MCF 10A (cell line): ENCODE measurements at regions of chr1 and their contacts with region 1.

Region 1: GRCh38 chr1:214123061-214123784 is 135.4 kb downstream of the PROX1 start:
- DNase-seq: peak; percentile 78
- H3K4me3 Mint-ChIP-seq: no peak overlapping the region
- H3K27ac Mint-ChIP-seq: no peak overlapping the region
- H3K4me1 Mint-ChIP-seq: peaks cover 6% of the 10 kb centered on the region
- H3K27me3 Mint-ChIP-seq: no peaks in the 10 kb centered on the region
- CTCF ChIP-seq: peak; percentile 95

Region 2: DNA sequence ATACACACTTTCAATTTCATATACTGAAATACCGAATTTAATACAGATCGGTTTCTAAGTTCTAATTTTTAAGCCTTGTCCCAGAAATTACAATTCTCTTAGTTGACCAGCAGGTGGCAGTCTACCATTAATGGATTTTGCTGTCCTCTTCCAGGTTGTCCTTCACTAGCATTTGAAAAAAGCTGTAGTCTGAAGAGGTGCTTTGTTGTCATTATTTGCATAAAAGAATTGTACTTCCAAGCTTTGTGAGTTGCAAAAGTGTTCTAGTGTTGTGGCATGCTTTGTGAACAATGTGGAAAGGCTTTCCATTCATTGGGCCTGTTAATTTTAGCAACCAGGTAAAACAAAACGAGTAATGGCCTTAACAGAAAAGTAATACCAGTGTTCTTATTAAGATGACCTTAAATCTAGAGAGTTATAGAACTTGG is 878.5 kb before region 1 on chr1:
- CTCF ChIA-PET with region 1: interaction called, 34 read pairs
- POLR2A ChIA-PET with region 1: interaction called, 3 read pairs
- intact Hi-C with region 1: loop called (anchors 1 kb)
- DNase-seq: peak; percentile 88
- H3K4me3 Mint-ChIP-seq: no peak overlapping the region
- H3K27ac Mint-ChIP-seq: peak overlapping the region; percentile 17
- H3K4me1 Mint-ChIP-seq: no peaks in the 10 kb centered on the region
- H3K27me3 Mint-ChIP-seq: no peaks in the 10 kb centered on the region
- CTCF ChIP-seq: peak; percentile 97

Region 3: GRCh38 chr1:213374369-213374768 is 748.9 kb before region 1 on chr1:
- CTCF ChIA-PET with region 1: interaction called, 138 read pairs
- POLR2A ChIA-PET with region 1: interaction called, 6 read pairs
- intact Hi-C with region 1: loop called (anchors 1 kb)
- DNase-seq: peak; percentile 90
- H3K4me3 Mint-ChIP-seq: no peak overlapping the region
- H3K27ac Mint-ChIP-seq: no peak overlapping the region
- H3K4me1 Mint-ChIP-seq: peaks cover 4% of the 10 kb centered on the region
- H3K27me3 Mint-ChIP-seq: no peaks in the 10 kb centered on the region
- CTCF ChIP-seq: peak; percentile 99

Region 4: GRCh38 chr1:213786683-213787082 is 336.5 kb before region 1 on chr1:
- CTCF ChIA-PET with region 1: interaction called, 13 read pairs
- POLR2A ChIA-PET with region 1: no interaction called
- intact Hi-C with region 1: no loop called
- DNase-seq: no peak
- H3K4me3 Mint-ChIP-seq: no peak overlapping the region
- H3K27ac Mint-ChIP-seq: no peak overlapping the region
- H3K4me1 Mint-ChIP-seq: no peaks in the 10 kb centered on the region
- H3K27me3 Mint-ChIP-seq: peaks cover 51% of the 10 kb centered on the region
- CTCF ChIP-seq: no peak

Region 5: GRCh38 chr1:214102907-214103306 is 20.3 kb before region 1 on chr1:
- CTCF ChIA-PET with region 1: interaction called, 13 read pairs
- POLR2A ChIA-PET with region 1: interaction called, 3 read pairs
- intact Hi-C with region 1: no loop called
- DNase-seq: peak; percentile 86
- H3K4me3 Mint-ChIP-seq: no peak overlapping the region
- H3K27ac Mint-ChIP-seq: no peak overlapping the region
- H3K4me1 Mint-ChIP-seq: peaks cover 5% of the 10 kb centered on the region
- H3K27me3 Mint-ChIP-seq: no peaks in the 10 kb centered on the region
- CTCF ChIP-seq: no peak

Region 6: DNA sequence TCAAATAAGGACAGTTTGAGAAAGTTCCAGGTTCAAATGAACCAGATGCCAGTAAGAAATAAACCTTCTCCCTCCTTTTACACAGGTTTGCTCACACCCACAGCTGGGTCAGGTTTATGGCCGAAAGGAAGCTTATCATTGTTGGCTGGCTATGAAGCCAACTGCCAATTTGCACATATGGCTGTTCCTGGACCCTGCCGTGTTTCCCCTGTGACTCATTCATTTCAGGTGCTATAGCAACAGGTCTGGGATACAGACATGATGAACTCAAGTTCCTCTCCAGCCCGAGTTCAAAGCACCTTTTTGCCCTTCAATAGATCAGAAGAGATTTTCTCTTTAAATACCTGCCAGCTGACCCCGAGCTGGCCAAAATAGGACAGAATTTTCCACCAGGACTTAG is 23.3 kb after region 1 on chr1:
- CTCF ChIA-PET with region 1: interaction called, 11 read pairs
- POLR2A ChIA-PET with region 1: no interaction called
- intact Hi-C with region 1: no loop called
- DNase-seq: peak; percentile 50
- H3K4me3 Mint-ChIP-seq: no peak overlapping the region
- H3K27ac Mint-ChIP-seq: no peak overlapping the region
- H3K4me1 Mint-ChIP-seq: peaks cover 14% of the 10 kb centered on the region
- H3K27me3 Mint-ChIP-seq: no peaks in the 10 kb centered on the region
- CTCF ChIP-seq: no peak